Endothelial cell of umbilical vein (primary cell): ENCODE measurements at regions of chr7 and their contacts with region 1.

Region 1: DNA sequence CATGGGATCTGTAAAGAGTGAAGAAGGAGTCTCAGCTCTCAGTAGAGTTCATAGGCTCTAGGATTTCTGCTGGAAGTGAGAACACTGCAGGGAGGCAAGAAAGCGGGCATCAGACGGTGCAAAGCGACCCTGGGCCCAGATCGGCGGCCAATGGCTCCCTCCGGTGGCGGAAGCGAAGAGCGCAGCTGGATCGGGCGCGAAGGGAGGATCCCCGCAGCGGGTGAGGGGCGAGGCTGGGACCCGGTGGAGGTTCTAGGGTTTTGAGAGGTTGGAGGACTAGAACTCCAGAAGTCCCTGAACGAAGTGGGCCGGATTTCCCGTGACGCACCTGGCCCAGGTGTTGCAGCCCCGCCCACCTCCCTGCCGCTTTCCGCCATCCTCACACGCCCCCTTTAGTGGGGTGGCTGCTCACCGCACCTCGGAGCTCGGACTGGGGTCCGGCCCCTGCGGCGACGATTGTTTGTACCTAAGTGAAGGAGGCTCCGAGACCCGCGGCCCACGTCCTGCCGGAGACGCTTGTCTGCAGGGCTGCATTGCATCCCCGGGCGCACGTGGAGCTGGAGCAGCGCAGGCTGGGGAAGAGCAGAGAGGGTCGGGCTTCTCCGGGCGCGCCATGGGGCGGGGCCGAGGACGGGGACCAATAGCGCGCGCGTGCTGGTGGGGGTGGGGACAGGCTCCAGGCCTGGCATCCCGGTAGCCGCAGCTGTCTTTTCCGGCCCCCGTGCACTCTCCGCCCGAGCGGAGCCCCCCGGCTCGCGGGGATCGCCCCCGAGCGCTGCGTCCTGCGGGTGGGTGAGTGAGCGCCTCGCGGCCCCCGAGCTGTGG is at the start of gene SLC12A9:
- DNase-seq: peak; percentile 84
- H3K4me3 ChIP-seq: peak within 1 kb of the TSS; percentile 67 to 80 (median 79)
- H3K27ac ChIP-seq: no peak within 1 kb of the TSS
- H3K4me1 ChIP-seq: peaks cover 14% of the 10 kb centered on the region
- H3K27me3 ChIP-seq: no peaks in the 10 kb centered on the region
- CTCF ChIP-seq: peak; percentile 94 to 95
- POLR2A ChIP-seq: peak; percentile 62
- total RNA-seq, gene SLC12A9: 30.1 and 35.0 TPM in 2 replicates

Region 2: DNA sequence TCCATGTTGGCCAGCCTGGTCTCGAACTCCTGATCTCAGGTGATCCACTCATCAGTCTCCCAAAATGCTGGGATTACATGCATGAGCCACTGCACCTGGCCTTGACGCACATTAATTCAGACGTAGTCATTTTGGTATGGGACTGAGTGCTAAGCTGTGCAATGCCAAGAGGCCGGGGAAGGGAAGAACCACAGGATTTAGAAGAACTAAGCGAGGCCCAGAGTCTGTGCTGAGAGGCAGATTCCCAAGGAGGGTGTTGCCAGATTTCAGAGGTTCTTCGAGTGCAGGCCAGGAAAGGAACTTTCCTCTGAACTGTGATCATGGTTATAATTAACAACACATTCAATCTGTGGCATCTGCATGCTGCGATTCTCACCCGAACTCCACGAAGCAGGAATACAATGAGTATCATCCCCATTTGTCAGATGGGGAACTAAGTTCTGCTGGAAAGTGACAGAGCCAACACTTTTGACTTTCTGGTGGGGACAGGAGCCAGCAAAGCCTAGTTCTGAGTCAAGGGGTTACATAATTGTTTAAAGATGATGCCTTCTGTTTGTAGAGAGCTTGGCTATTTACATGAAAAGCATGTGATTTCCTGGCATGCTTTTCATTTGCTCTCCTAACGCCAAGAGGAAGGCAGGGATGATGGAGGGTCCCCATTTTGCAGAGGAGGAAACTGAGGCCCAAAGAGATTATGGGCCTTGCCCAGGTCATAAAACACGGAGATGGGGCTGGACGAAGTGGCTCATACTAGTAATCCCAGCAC is 125.1 kb before region 1 on chr7:
- CTCF ChIA-PET with region 1: interaction called, 8 read pairs
- POLR2A ChIA-PET with region 1: no interaction called
- dilution Hi-C with region 1: loop called (anchors 25 kb)
- intact Hi-C with region 1: loop called (anchors 1 kb)
- DNase-seq: no peak
- H3K4me3 ChIP-seq: no peak overlapping the region
- H3K27ac ChIP-seq: no peak overlapping the region
- H3K4me1 ChIP-seq: no peaks in the 10 kb centered on the region
- H3K27me3 ChIP-seq: peaks cover 4 to 11% of the 10 kb centered on the region in 2 experiments
- CTCF ChIP-seq: no peak
- POLR2A ChIP-seq: no peak

Region 3: DNA sequence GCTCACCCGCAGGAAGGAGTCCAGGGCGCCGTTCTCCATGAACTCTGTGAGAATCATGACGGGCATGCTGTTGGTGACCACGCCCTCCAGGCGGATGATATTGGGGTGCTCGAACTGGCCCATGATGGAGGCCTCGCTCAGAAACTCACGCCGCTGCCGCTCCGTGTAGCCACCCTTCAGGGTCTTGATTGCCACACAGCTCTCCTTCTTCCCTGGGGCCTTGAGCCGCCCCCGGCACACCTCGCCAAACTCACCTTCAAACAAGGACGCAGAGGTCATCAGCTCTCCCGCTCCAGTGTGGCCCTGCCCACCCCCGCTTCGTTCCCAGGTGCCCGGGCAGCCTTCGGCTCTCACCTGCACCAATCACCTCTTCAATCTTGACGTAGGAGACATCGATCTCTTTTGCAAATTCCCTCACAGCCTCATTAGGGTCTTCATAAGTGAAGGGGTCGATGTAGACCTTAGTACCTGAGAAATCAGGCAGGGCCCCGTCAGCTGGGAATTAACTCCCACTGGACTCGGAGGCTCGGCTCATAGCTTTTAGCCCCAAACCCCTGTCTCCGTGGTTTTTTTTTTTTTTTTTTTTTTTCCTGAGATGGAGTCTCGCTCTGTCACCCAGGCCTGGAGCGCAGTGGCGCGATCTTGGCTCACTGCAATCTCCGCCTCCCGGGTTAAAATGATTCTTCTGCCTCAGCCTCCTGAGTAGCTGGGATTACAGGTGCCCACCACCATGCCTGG is 39.4 kb before region 1 on chr7:
- CTCF ChIA-PET with region 1: interaction called, 214 read pairs
- POLR2A ChIA-PET with region 1: no interaction called
- dilution Hi-C with region 1: no loop called
- intact Hi-C with region 1: no loop called
- DNase-seq: no peak
- H3K4me3 ChIP-seq: no peak overlapping the region
- H3K27ac ChIP-seq: no peak overlapping the region
- H3K4me1 ChIP-seq: no peaks in the 10 kb centered on the region
- H3K27me3 ChIP-seq: no peaks in the 10 kb centered on the region
- CTCF ChIP-seq: no peak
- POLR2A ChIP-seq: no peak

Region 4: DNA sequence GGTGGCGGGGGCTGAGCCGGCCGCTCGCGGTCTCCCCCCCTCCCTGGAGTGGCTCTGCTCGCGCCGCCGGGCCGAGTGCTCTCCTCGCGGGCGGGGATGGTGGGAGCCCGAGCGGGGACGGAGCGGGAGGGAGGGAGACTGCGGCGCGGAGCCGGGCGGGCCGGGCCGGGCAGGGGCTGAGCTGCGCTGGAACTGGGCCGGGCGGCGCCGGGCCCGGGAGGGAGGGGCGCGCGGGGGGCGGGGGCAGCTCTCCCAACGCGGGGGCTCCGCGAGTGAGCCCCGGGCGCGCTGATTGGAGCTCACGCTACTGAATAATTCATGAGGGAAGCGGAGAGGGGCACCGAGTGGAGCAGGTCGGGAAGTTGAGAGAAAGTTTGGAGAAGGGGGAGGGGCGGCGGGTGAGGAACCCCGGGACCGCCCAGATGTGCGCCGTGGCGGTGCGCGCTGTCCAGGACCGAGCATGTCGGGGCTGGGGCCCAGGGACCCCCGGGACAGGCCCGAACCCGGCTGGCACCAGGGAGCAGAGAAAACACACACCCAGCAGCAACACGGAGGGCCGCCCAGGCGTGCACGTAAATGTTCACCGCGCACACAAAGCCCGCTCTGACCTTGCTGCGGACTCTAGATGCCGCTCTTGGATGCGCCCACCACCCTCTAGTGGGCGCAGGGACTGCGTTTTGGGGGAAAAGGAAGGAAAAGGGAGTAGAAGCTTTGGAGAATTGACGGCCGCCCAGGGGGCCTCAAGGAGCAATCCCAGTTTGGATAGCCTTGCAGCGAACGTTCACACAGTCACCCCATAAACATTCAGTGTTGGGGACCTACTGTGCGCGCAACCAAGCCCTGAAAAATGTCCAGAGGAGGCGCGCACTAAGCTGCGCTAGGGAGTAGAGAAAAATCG is 24.7 kb before region 1 on chr7 and contains the start of gene EPHB4:
- CTCF ChIA-PET with region 1: interaction called, 130 read pairs
- POLR2A ChIA-PET with region 1: interaction called, 10 read pairs
- dilution Hi-C with region 1: no loop called
- intact Hi-C with region 1: loop called (anchors 1 kb)
- DNase-seq: peak; percentile 88
- H3K4me3 ChIP-seq: peak within 1 kb of the TSS; percentile 88 to 92 (median 90)
- H3K27ac ChIP-seq: peak within 1 kb of the TSS; percentile 94
- H3K4me1 ChIP-seq: peaks cover 23% of the 10 kb centered on the region
- H3K27me3 ChIP-seq: no peaks in the 10 kb centered on the region
- CTCF ChIP-seq: peak; percentile 42 to 62
- POLR2A ChIP-seq: peak; percentile 17
- total RNA-seq, gene EPHB4: 148 and 193 TPM in 2 replicates

Region 5: GRCh38 chr7:100867040-100867775 is 14.9 kb after region 1 on chr7 and contains the start of gene TRIP6:
- CTCF ChIA-PET with region 1: interaction called, 10 read pairs
- POLR2A ChIA-PET with region 1: no interaction called
- dilution Hi-C with region 1: no loop called
- intact Hi-C with region 1: no loop called
- DNase-seq: peak; percentile 76
- H3K4me3 ChIP-seq: peak within 1 kb of the TSS; percentile 72 to 93 (median 87)
- H3K27ac ChIP-seq: peak within 1 kb of the TSS; percentile 90
- H3K4me1 ChIP-seq: peaks cover 36% of the 10 kb centered on the region
- H3K27me3 ChIP-seq: no peaks in the 10 kb centered on the region
- CTCF ChIP-seq: no peak
- POLR2A ChIP-seq: peak; percentile 82
- total RNA-seq, gene TRIP6: 84.5 and 90.3 TPM in 2 replicates

Region 6: DNA sequence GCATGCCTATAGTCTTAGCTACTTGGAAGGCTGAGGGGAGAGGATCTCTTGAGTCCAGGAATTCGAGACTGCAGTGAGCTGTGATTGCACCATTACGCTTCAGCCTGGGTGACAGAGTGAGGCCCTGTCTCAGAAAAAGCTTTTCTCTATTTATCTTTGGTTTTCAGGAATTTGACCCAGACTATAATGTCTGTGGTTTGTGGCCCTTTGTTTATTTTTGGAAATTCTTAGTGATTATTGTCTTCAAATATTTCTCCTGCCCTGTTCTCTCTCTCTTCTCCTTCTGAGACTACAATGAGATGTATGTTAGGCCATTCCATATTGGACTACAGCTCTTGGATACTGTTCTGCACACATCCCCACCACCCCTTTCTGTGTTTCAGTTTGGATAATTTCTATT is 121.8 kb after region 1 on chr7:
- CTCF ChIA-PET with region 1: no interaction called
- POLR2A ChIA-PET with region 1: no interaction called
- dilution Hi-C with region 1: no loop called
- intact Hi-C with region 1: no loop called
- DNase-seq: no peak
- H3K4me3 ChIP-seq: no peak overlapping the region
- H3K27ac ChIP-seq: no peak overlapping the region
- H3K4me1 ChIP-seq: no peaks in the 10 kb centered on the region
- H3K27me3 ChIP-seq: peaks cover 0 to 2% of the 10 kb centered on the region in 2 experiments
- CTCF ChIP-seq: no peak
- POLR2A ChIP-seq: no peak